ENCODE measurements at regions of chr2 and their contacts with region 1.

Region 1: DNA sequence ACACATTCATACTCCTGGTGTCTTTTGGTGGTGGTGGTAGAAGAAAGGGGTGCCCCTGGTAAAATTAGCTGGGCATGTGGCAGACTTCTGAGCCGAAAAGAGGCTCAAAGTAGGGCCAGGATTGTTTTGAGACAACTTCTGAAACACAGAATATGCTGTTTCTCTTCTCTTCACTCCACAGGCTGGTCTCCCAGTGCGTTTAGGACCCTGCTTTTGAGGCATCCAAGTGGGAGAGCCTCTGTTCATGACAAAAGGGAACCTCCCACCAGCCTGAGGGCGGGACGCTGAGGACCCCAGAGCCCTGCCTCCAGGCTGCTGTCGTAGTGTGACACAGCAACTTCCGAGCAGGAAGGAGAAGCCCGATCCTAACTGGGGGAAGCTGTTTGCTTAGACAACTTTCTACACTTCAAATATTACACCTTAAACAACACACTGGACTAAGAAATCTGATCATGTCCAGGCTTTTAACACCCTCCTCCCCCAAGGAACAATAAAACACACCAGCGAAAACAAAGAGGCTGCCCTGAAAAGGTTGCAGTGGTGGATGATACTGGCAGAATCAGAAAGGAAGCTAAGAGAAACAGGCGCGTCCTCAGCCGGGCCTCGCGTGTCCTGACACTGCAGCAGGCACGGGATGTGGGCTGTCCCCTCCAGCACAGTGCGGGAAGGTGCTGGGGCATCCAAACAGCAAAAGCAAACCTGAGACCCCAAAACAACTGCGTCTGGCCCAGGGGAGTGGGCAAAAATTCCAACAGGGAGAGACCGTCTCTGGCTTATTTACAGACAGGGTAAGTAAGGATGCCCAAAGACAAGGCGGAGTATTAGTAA is 9.3 kb downstream of the SERTAD2 start:
- DNase-seq: peak; percentile 91 to 95
- ATAC-seq: peak; percentile 85 to 94
- H3K4me3 ChIP-seq: peak overlapping the region; percentile 44
- H3K27ac ChIP-seq: peak overlapping the region; percentile 93 to 95
- H3K4me1 ChIP-seq: peaks cover 87% of the 10 kb centered on the region
- CTCF ChIP-seq: no peak; the same call in 2 of the 3 replicates
- EP300 ChIP-seq: no peak
- POLR2A ChIP-seq: peak; percentile 56
- RAD21 ChIP-seq: no peak

Region 2: GRCh38 chr2:64609227-64609941 is 35.0 kb before region 1 on chr2:
- CTCF ChIA-PET with region 1: interaction called, 31 read pairs
- POLR2A ChIA-PET with region 1: interaction called, 28 read pairs
- DNase-seq: peak; percentile 80 to 88
- ATAC-seq: peak; percentile 90
- H3K4me3 ChIP-seq: peak overlapping the region; percentile 55
- H3K27ac ChIP-seq: peak overlapping the region; percentile 85 to 97
- H3K4me1 ChIP-seq: 0 out of 3 replicates have a peak, but pooled peaks cover 4% of the 10 kb centered on the region
- CTCF ChIP-seq: peak; percentile 92
- EP300 ChIP-seq: no peak
- POLR2A ChIP-seq: peak; percentile 77; the same call in 1 of the 2 replicates
- RAD21 ChIP-seq: peak; percentile 6 to 65; a peak in 3 of 5 replicates

Region 3: GRCh38 chr2:64629329-64629781 is 15.0 kb before region 1 on chr2:
- CTCF ChIA-PET with region 1: interaction called, 25 read pairs
- POLR2A ChIA-PET with region 1: interaction called, 4 read pairs
- DNase-seq: no peak
- ATAC-seq: no peak
- H3K4me3 ChIP-seq: no peak overlapping the region
- H3K27ac ChIP-seq: no peak overlapping the region
- H3K4me1 ChIP-seq: no peaks in the 10 kb centered on the region
- CTCF ChIP-seq: no peak
- EP300 ChIP-seq: no peak
- POLR2A ChIP-seq: no peak
- RAD21 ChIP-seq: no peak

Region 4: GRCh38 chr2:64750817-64751285 is 106.5 kb after region 1 on chr2:
- CTCF ChIA-PET with region 1: interaction called, 36 read pairs
- POLR2A ChIA-PET with region 1: interaction called, 30 read pairs
- DNase-seq: peak in 1 of 2 experiments; percentile 100
- ATAC-seq: peak; percentile 85 to 94
- H3K4me3 ChIP-seq: peak overlapping the region; percentile 52
- H3K27ac ChIP-seq: peak overlapping the region; percentile 73 to 96
- H3K4me1 ChIP-seq: peaks cover 22% of the 10 kb centered on the region
- CTCF ChIP-seq: no peak
- EP300 ChIP-seq: no peak
- POLR2A ChIP-seq: peak; percentile 91
- RAD21 ChIP-seq: peak in 1 of 2 experiments; percentile 1; a peak in 2 of 5 replicates

Region 5: GRCh38 chr2:64859312-64860212 is 215.2 kb after region 1 on chr2:
- CTCF ChIA-PET with region 1: interaction called, 63 read pairs
- POLR2A ChIA-PET with region 1: interaction called, 11 read pairs
- DNase-seq: peak; percentile 83 to 93
- ATAC-seq: peak; percentile 83 to 89
- H3K4me3 ChIP-seq: peak overlapping the region; percentile 43
- H3K27ac ChIP-seq: peak overlapping the region; percentile 81 to 90
- H3K4me1 ChIP-seq: peaks cover 26% of the 10 kb centered on the region
- CTCF ChIP-seq: peak; percentile 28; the same call in 2 of the 3 replicates
- EP300 ChIP-seq: no peak
- POLR2A ChIP-seq: peak; percentile 59
- RAD21 ChIP-seq: peak; percentile 1 to 22; a peak in 3 of 5 replicates

Region 6: DNA sequence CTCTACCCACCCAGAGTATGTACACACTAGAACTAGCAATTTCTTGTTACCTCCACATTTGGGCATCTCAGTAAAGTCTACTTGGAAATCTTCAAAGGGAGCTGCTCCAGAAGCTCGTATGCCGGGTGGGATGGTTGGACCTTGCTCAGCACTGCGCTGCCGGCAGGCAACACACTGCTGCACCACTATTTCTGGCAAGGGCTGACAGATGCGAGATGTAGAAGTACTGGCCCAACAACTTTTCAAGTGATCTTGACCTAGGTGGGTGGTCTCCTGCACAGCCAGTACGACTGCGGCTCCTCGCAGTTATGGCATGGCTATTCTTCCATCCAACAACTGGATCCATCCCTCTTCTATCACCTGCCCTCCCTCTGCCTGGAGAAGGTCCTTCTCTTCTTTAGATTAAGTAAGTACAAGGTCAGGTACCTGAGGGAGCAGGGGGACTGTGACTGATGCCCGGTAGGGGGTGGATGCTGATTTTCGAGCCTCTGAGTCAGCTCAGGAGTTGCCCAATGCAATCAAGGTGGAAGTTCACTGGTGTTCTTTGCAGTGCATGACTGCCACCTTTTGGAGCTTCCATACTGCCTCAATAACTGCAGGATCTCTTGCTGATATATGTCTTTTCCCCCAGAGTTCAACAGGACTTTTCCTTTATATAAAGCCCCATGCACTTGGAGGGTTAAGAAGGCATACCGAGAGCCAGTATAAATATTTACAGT is 244.4 kb after region 1 on chr2:
- CTCF ChIA-PET with region 1: interaction called, 13 read pairs
- POLR2A ChIA-PET with region 1: no interaction called
- DNase-seq: peak; percentile 83 to 85
- ATAC-seq: peak; percentile 94 to 97
- H3K4me3 ChIP-seq: no peak overlapping the region
- H3K27ac ChIP-seq: no peak overlapping the region
- H3K4me1 ChIP-seq: 0 out of 3 replicates have a peak, but pooled peaks cover 3% of the 10 kb centered on the region
- CTCF ChIP-seq: peak; percentile 80
- EP300 ChIP-seq: no peak
- POLR2A ChIP-seq: no peak
- RAD21 ChIP-seq: peak; percentile 90 to 91

Measured in A549 (cell line).